ENCODE measurements at regions of chr16 and their contacts with region 1.

Region 1: GRCh38 chr16:88737298-88738150 is 31.2 kb downstream of the CTU2 start:
- DNase-seq: peak; percentile 34 to 88 (median 59)
- ATAC-seq: peak; percentile 97
- H3K4me3 ChIP-seq: no peak overlapping the region
- H3K4me3 Mint-ChIP-seq: no peak overlapping the region
- H3K27ac ChIP-seq: no peak overlapping the region
- H3K27ac Mint-ChIP-seq: no peak overlapping the region
- H3K4me1 ChIP-seq: peaks cover 6% of the 10 kb centered on the region
- H3K4me1 Mint-ChIP-seq: peaks cover 2% of the 10 kb centered on the region
- H3K27me3 ChIP-seq: no peaks in the 10 kb centered on the region
- H3K27me3 Mint-ChIP-seq: no peaks in the 10 kb centered on the region
- CTCF ChIP-seq: peak; percentile 95

Region 2: DNA sequence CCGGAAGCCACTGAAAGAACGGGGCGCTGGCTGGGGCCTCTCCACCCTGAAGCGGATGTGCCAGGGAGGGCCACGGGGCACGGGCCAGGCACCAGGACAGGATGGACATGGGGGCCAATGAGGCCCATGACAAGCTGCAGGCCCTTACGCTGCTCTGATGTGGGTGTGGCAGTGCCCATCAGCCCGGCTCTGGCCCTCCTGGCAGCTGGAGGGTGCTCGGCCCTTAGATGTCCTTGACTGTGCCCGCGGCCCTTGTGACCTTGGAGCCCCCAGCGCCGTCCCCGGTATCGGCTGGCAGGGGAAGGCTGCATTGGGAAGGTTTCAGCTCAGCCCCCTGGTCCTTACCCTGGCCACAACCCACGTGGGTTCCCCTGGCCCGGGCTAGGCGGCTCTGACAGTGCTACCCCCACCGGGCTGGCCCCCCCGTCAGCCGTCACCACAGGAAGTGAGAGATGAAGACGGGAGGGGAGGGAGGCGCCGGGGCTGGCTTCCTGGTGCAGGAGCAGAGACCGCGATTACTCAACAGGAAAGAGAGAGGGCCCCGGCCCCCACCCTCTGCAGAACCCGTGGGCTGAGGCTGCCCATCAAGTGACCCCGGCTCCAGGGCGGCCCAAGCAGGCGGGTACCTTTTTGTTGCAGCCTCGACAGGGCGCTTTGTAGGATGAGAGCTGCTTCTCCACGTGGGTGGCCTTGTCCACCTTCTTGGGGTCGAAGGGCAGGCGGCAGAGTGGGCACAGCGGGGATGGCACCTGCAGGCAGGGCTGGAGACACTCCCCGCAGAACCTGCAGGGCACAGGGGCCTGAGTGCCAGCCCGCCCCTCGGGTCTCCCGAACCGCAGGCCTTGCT is 36.7 kb before region 1 on chr16:
- CTCF ChIA-PET with region 1: interaction called, 13 read pairs
- POLR2A ChIA-PET with region 1: interaction called, 4 read pairs
- intact Hi-C with region 1: loop called in 1 of 2 experiments (anchors 5 kb)
- DNase-seq: peak; percentile 92 to 98 (median 97)
- ATAC-seq: peak; percentile 65
- H3K4me3 ChIP-seq: peak overlapping the region; percentile 74 to 95
- H3K4me3 Mint-ChIP-seq: peak overlapping the region; percentile 90
- H3K27ac ChIP-seq: peak overlapping the region; percentile 83 to 91
- H3K27ac Mint-ChIP-seq: peak overlapping the region; percentile 98
- H3K4me1 ChIP-seq: peaks cover 56% of the 10 kb centered on the region
- H3K4me1 Mint-ChIP-seq: peaks cover 61% of the 10 kb centered on the region
- H3K27me3 ChIP-seq: no peaks in the 10 kb centered on the region
- H3K27me3 Mint-ChIP-seq: no peaks in the 10 kb centered on the region
- CTCF ChIP-seq: no peak

Region 3: DNA sequence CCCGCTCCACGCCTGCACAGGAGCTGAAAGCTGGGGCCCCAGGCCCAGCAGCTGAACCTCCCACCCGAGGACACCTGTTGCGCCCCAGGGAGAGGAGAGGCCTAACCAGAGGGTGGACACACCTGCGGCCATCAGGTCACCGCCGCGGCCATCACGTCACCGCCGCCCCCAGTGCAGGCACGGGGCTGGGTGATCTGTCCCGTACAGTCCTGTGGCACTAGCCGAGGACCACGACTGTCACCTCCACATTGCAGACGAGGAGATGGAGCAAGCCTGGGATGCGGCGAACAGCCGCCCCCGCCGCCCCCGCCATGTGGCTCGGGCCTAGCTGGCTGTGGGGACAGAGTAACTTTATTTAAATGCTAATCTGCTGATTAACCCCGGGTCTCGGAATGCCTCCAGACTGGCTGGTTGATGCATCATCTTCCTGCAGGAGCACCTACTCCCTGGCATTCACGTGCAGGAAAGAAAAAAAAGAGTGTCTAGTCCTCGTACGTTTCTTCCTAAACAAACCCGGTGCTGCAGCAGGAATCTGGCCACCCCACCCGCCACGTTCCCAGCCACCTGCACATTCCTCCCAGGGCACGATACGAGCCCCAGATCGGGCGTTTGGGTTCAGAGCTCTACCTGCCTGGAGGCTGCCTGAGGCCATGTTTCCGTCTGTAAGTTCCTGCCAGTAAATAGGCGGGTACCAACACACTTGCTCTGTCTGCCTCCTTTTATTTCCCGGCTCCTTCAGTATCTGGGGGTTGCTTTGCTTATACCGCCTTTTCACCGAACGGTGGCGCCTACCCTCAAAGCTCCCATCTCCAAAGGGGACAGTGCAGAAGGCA is 17.6 kb after region 1 on chr16:
- CTCF ChIA-PET with region 1: interaction called, 16 read pairs
- POLR2A ChIA-PET with region 1: no interaction called
- intact Hi-C with region 1: no loop called
- DNase-seq: peak in 1 of 9 experiments; percentile 19
- ATAC-seq: peak; percentile 61
- H3K4me3 ChIP-seq: no peak overlapping the region
- H3K4me3 Mint-ChIP-seq: no peak overlapping the region
- H3K27ac ChIP-seq: no peak overlapping the region
- H3K27ac Mint-ChIP-seq: no peak overlapping the region
- H3K4me1 ChIP-seq: no peaks in the 10 kb centered on the region
- H3K4me1 Mint-ChIP-seq: peaks cover 14% of the 10 kb centered on the region
- H3K27me3 ChIP-seq: no peaks in the 10 kb centered on the region
- H3K27me3 Mint-ChIP-seq: no peaks in the 10 kb centered on the region
- CTCF ChIP-seq: no peak

Region 4: DNA sequence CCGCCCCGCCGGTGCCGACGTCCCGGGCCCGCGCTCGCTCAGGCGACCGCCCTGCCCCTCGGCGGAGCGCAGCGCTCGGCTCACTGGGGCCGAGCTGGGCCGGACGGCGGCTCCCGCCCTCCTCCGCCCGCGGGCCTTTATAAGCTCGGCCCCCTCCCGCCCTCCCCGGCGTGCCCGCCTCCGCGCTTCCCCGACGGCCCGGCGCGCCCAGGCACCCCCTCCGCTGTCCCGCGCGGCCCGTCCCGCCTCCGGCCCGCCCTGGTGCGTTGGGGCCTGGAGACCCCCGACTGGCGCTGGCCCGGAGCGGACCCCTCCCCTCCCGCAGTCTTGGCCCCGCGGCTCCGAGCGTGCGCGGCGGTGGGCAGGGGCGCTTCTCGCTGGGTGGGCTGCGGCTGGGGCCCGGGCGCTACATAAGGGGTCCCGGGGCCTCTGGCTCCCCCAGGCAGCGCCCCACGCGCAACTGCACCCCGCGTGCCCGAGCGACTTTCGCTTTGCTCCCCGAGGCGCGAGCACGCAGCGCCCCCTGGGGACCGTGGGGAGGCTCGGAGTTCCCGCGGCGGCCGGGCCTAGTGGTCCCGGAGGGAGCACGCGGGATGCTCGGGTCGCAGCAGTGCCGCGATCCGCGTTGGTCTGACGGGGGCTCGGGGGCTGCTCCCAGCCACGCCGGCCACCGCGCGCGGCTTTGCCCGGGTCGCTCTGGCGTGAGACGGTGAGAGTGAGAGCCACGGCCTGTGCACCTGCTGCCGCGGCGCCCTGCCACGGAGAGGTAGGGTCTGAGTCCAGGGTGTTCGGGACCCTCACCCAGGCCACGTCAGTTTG is 47.8 kb after region 1 on chr16 and contains the start of gene PIEZO1:
- CTCF ChIA-PET with region 1: interaction called, 56 read pairs
- POLR2A ChIA-PET with region 1: interaction called, 5 read pairs
- intact Hi-C with region 1: loop called (anchors 1 kb)
- DNase-seq: peak; percentile 62 to 93 (median 84)
- ATAC-seq: peak; percentile 52
- H3K4me3 ChIP-seq: peak within 1 kb of the TSS; percentile 58 to 66
- H3K4me3 Mint-ChIP-seq: peak within 1 kb of the TSS; percentile 78
- H3K27ac ChIP-seq: peak within 1 kb of the TSS; percentile 40 to 85
- H3K27ac Mint-ChIP-seq: peak within 1 kb of the TSS; percentile 82
- H3K4me1 ChIP-seq: peaks cover 55% of the 10 kb centered on the region
- H3K4me1 Mint-ChIP-seq: peaks cover 43% of the 10 kb centered on the region
- H3K27me3 ChIP-seq: no peaks in the 10 kb centered on the region
- H3K27me3 Mint-ChIP-seq: no peaks in the 10 kb centered on the region
- CTCF ChIP-seq: peak; percentile 94
- total RNA-seq, gene PIEZO1: 67.4 to 70.1 TPM

Region 5: DNA sequence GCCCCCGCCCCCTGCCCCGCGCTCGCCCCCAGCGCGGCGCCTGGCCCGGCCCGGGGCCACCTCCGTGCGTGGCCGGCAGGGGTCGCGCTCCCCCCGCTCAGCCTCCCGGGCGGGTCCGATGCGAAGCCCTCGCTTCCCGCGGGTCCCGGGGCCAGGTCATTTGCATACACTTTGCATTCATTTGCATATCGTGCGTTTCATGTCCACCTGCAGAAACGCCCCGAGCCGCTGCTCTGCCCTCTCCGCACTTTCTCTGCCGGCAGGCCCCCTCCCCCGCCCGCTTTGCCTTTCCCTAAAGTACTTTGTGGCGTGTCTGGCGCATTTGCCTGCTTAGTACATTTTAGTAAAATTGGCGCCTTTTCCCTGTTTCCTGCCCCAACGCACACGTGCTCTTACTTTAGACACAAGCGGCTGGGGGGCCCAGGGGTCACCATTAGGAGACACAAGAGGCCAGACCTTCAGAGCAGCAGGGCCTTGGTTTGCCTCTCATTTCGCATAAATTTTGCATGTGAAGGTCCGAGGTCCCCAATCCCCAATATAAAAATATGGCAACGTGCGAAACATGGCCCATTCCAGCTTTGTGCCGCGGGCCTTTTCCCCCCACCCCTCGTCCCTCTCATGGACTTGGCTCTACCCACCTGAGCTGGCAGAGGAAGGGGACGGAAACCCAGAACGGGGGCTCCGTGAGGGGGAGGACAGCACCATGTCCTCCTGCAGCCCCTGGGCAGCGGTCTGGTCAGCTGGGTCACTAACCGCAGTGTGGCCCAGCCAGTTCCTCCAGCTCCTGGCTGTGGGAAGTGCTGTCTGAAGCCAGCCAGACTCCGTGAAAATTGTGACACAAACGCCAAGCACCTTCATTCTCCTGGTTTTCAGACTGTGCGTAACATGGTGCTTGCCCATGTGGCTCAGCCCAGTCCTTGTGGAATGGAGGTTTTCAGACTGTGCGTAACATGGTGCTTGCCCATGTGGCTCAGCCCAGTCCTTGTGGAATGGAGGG is 204.7 kb after region 1 on chr16:
- CTCF ChIA-PET with region 1: no interaction called
- POLR2A ChIA-PET with region 1: no interaction called
- intact Hi-C with region 1: loop called in 1 of 2 experiments (anchors 10 kb)
- DNase-seq: peak; percentile 26 to 77 (median 59)
- ATAC-seq: peak; percentile 76
- H3K4me3 ChIP-seq: no peak overlapping the region
- H3K4me3 Mint-ChIP-seq: peak overlapping the region; percentile 54
- H3K27ac ChIP-seq: no peak overlapping the region
- H3K27ac Mint-ChIP-seq: no peak overlapping the region
- H3K4me1 ChIP-seq: peaks cover 21% of the 10 kb centered on the region
- H3K4me1 Mint-ChIP-seq: peaks cover 11% of the 10 kb centered on the region
- H3K27me3 ChIP-seq: peaks cover 18 to 28% of the 10 kb centered on the region in 2 experiments
- H3K27me3 Mint-ChIP-seq: peaks cover 34% of the 10 kb centered on the region
- CTCF ChIP-seq: peak; percentile 78

Measured in CD8-positive, alpha-beta T cell (primary cell).